ENCODE measurements at regions of chr1 and their contacts with region 1.

Region 1: DNA sequence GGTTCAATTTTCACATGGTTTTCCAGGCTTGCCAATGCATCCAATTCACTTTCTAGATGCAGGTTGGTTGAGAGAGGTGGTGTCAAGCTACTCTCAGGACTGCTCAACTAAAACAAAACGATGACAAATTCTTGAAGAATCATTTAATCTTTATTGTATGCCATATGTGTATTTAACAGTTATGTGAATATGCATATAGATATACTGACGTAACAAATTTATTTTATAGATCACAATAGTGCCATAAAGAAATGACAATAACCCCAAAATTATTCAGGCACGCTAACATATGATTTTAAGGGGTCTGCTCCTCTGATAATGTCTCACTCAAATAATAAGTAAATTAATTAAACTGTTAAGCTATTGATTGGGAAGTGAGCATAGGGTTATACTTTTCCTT is 105.3 kb downstream of the TRIM33 start:
- DNase-seq: no peak
- ATAC-seq: no peak
- H3K4me3 ChIP-seq: no peak overlapping the region
- H3K27ac ChIP-seq: no peak overlapping the region
- H3K4me1 ChIP-seq: no peaks in the 10 kb centered on the region
- H3K27me3 ChIP-seq: no peaks in the 10 kb centered on the region
- CTCF ChIP-seq: no peak
- EP300 ChIP-seq: no peak
- POLR2A ChIP-seq: no peak
- RAD21 ChIP-seq: no peak

Region 2: DNA sequence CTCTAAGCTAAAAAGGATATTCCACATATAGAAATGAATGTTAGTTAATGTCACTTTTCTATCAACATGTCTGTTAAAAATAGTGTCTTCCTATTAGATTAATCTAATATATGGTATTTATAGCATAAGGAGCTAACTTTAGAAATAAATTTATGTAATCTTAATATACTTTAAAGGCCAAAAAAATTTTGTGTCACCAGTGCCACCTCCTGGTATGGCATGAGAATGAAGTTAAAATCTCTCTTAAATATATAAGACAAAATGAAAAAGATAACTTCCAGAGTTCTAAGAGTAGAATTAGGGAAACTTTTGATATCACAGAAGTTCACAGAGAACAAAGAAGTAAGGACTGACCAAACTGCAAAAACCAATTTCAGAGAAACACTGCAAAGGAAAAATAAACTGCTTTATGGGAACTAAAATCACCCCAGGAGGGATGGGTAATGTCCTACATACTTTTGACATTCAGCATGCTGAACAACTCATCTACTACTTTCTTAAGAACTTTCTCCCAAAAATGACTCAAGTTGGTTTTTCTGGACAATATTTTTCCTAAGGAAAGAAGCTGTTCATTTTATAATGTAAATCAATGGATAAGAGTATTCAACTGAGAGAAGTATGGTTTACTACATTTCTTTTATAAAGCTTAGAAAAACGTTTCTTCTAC is 22.6 kb after region 1 on chr1:
- CTCF ChIA-PET with region 1: interaction called, 11 read pairs
- POLR2A ChIA-PET with region 1: no interaction called
- RAD21 ChIA-PET with region 1: no interaction called
- SMC1A ChIA-PET with region 1: interaction called, 6 read pairs
- in situ Hi-C with region 1: no loop called
- intact Hi-C with region 1: no loop called
- DNase-seq: no peak
- ATAC-seq: no peak
- H3K4me3 ChIP-seq: no peak overlapping the region
- H3K27ac ChIP-seq: no peak overlapping the region
- H3K4me1 ChIP-seq: 0 out of 2 replicates have a peak, but pooled peaks cover 2% of the 10 kb centered on the region
- H3K27me3 ChIP-seq: no peaks in the 10 kb centered on the region
- CTCF ChIP-seq: peak in 2 of 3 experiments; percentile 23 to 34; a peak in 3 of 6 replicates
- EP300 ChIP-seq: no peak
- POLR2A ChIP-seq: no peak
- RAD21 ChIP-seq: peak; percentile 26; the same call in 1 of the 2 replicates